ENCODE measurements at regions of chr21 and their contacts with region 1.

Region 1: GRCh38 chr21:44510508-44511210 is 29.3 kb downstream of the KRTAP10-1 start:
- DNase-seq: peak; percentile 81
- H3K4me3 Mint-ChIP-seq: no peak overlapping the region
- H3K27ac Mint-ChIP-seq: no peak overlapping the region
- H3K4me1 Mint-ChIP-seq: peaks cover 5% of the 10 kb centered on the region
- H3K27me3 Mint-ChIP-seq: no peaks in the 10 kb centered on the region

Region 2: DNA sequence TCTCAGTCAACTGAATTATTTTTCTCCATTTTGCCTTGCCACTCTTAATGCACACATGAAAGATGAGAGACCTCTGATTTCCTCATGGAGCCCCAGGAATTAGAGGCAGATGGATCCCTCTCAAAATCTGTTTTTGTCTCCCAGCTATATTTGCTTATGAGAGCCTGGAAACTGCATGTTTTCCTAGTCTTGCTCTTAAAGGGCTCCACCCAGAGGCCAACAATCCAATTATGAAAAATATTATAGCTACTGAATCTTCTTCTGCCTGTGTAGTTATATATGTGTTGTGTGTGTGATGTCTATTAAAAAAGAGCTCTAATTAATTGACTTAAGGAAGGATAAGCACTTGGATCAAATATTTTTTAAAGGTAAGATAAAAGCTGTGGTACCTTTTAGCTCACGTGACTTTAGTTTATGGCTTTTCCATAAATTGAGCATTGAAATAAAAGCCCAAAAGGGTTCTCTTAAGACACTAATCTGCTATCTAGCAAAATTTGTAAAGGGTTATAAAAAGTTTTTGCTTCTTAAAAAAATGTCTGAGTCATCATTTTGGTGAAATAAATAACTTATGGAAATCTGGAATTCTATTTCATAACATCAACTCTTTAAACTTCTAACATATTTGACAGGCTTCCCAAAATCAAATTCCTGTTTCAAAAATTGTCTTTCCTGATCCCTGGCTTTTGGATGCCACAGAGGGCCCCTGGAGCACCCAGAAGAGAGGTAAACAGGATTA is 231.9 kb after region 1 on chr21:
- CTCF ChIA-PET with region 1: interaction called, 37 read pairs
- intact Hi-C with region 1: loop called (anchors 1 kb)
- DNase-seq: peak; percentile 18
- H3K4me3 Mint-ChIP-seq: no peak overlapping the region
- H3K27ac Mint-ChIP-seq: no peak overlapping the region
- H3K4me1 Mint-ChIP-seq: peaks cover 4% of the 10 kb centered on the region
- H3K27me3 Mint-ChIP-seq: no peaks in the 10 kb centered on the region

Region 3: DNA sequence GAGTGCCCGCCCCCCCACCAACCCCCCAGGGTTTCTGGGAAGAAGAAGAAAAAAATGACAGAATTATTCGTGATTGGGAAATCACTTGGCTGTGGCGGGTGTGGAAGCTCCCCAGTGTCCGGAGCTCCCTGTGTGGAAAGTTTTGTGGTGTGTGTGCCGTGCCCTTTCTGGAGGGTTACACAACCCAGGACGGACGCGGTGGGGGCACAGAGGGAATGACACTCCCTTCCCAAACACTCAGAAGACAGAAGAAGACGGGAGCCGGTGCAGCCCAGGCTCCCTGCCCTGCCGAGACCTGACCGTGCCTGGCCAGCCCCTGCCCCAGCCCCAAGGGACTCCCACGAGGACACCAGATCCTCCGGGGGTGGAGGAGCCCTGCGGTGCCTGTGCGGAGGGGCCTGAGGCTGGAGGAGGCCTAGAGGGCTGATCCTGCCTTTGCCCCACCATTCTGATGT is 530.7 kb after region 1 on chr21:
- CTCF ChIA-PET with region 1: no interaction called
- intact Hi-C with region 1: no loop called
- DNase-seq: no peak
- H3K4me3 Mint-ChIP-seq: no peak overlapping the region
- H3K27ac Mint-ChIP-seq: no peak overlapping the region
- H3K4me1 Mint-ChIP-seq: no peaks in the 10 kb centered on the region
- H3K27me3 Mint-ChIP-seq: peaks cover 2% of the 10 kb centered on the region

Measured in activated naive CD4-positive, alpha-beta T cell treated with anti-CD3 and anti-CD28 coated beads for 36 hours (primary cell).